HepG2 (cell line): ENCODE measurements at regions of chr12 and their contacts with region 1.

Region 1: GRCh38 chr12:53079226-53080117 is at the start of gene SPRYD3:
- DNase-seq: peak; percentile 96
- ATAC-seq: peak; percentile 98
- H3K4me3 ChIP-seq: peak within 1 kb of the TSS; percentile 72 to 89 (median 73)
- H3K27ac ChIP-seq: peak within 1 kb of the TSS; percentile 91
- H3K4me1 ChIP-seq: peaks cover 53% of the 10 kb centered on the region
- H3K27me3 ChIP-seq: no peaks in the 10 kb centered on the region; a peak in 1 of 5 replicates
- CTCF ChIP-seq: no peak
- EP300 ChIP-seq: no peak
- POLR2A ChIP-seq: peak; percentile 83 to 95
- RAD21 ChIP-seq: peak; percentile 15; the same call in 1 of the 2 replicates
- total RNA-seq, gene SPRYD3: 9.0 and 9.2 TPM in 2 replicates

Region 2: DNA sequence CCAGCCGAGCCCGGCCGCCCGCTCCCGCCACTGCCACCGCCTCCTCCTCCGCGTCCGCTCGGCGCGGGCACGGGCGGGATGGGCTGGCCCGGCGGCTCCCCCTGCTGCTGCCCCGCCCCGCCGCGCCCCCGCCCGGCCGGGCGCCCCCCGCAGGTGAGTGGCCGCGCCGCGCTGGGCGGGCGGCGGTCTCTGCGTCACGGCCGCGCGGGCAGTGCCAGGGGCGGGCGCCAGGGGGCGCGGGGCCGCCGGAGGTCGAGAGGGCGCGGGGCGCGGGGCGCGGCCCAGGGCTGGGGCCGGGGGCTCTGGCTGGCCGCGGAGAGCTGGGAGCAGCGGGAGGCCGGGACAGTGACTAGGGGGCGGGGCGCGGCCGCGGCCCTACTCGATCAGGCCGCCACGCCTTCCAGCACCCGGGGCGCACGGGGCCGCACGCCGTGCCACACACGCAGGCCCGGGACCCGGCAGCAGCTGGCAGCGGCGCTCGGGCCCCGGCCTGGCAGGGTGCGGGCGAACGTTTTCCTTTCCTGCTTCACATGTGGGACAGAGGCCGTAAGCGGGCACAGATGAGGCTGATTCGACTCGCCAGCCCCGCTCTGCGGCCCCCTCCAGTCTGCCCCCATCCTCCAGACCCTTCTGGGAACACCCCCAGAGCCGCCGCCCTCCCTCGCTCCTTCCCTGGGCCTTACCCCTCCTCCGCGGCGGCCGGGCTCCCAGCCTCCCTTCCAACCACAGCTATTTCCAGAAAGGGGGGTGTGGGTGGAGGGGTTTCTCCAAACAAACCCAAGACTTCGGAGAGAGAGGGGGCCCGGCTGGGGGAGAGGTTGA is 32.0 kb before region 1 on chr12:
- CTCF ChIA-PET with region 1: no interaction called
- POLR2A ChIA-PET with region 1: interaction called, 60 read pairs
- in situ Hi-C with region 1: no loop called
- intact Hi-C with region 1: no loop called
- DNase-seq: peak; percentile 44
- ATAC-seq: peak; percentile 2
- H3K4me3 ChIP-seq: peak overlapping the region; percentile 77 to 91 (median 83)
- H3K27ac ChIP-seq: peak overlapping the region; percentile 89
- H3K4me1 ChIP-seq: peaks cover 79% of the 10 kb centered on the region
- H3K27me3 ChIP-seq: no peaks in the 10 kb centered on the region; a peak in 1 of 5 replicates
- CTCF ChIP-seq: peak; percentile 3; the same call in 1 of the 2 replicates
- EP300 ChIP-seq: no peak
- POLR2A ChIP-seq: 0 out of 4 replicates have a peak, but pooled peaks of 1 of the 2 experiments have one; percentile 3
- RAD21 ChIP-seq: 0 out of 2 replicates have a peak, but pooled peaks have one; percentile 18

Region 3: GRCh38 chr12:53065975-53066931 is 13.2 kb before region 1 on chr12:
- CTCF ChIA-PET with region 1: no interaction called
- POLR2A ChIA-PET with region 1: interaction called, 43 read pairs
- in situ Hi-C with region 1: no loop called
- intact Hi-C with region 1: no loop called
- DNase-seq: peak; percentile 57
- ATAC-seq: peak; percentile 66
- H3K4me3 ChIP-seq: no peak overlapping the region
- H3K27ac ChIP-seq: no peak overlapping the region
- H3K4me1 ChIP-seq: peaks cover 25% of the 10 kb centered on the region
- H3K27me3 ChIP-seq: no peaks in the 10 kb centered on the region
- CTCF ChIP-seq: peak; percentile 95
- EP300 ChIP-seq: no peak
- POLR2A ChIP-seq: no peak
- RAD21 ChIP-seq: peak; percentile 95

Region 4: GRCh38 chr12:53098982-53099651 is 19.6 kb after region 1 on chr12:
- CTCF ChIA-PET with region 1: no interaction called
- POLR2A ChIA-PET with region 1: interaction called, 102 read pairs
- in situ Hi-C with region 1: no loop called
- intact Hi-C with region 1: loop called (anchors 2 kb)
- DNase-seq: peak; percentile 91
- ATAC-seq: peak; percentile 24
- H3K4me3 ChIP-seq: peak overlapping the region; percentile 56 to 90 (median 78); a peak in 5 of 6 replicates
- H3K27ac ChIP-seq: no peak overlapping the region
- H3K4me1 ChIP-seq: peaks cover 91% of the 10 kb centered on the region
- H3K27me3 ChIP-seq: peaks cover 0 to 6% of the 10 kb centered on the region in 2 experiments; a peak in 2 of 5 replicates
- CTCF ChIP-seq: peak; percentile 89
- EP300 ChIP-seq: peak in 1 of 2 experiments; percentile 51; a peak in 1 of 4 replicates
- POLR2A ChIP-seq: no peak
- RAD21 ChIP-seq: peak; percentile 89

Region 5: DNA sequence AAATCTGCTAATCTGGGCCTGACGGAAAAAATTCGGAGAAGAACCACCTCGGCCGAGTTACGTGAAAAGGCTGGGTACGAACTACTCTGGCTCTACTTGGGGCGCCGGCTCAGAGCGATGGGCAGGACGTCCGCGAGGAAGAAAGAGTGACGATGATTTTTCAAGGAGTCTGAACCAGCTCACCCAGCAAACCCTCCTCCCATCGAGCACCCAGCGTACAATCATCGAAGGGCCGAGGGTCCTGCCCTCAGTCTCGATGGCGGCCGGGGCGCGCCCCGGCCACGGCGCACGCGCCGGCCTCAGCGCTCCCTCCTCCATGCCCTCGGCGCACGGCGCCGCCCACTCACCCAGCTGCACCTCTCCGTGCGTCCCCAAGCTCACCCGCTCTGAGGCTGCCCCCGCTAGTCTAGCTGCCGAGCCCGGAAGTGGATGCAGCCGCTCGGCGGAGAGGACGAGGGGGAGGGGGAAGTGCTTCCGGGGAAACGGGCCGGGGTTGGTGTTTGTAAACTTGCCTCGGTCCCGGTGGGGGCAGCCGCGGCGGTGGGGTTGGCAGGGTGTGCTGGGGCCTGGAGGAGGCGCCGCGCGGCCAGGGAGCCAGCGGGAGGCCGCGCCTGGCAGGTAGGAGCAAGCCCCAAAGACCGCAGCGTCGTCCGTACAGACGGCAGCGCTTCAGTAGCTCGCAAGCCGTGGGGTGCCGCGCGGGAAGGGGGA is 100.9 kb after region 1 on chr12 and contains the starts of genes CSAD and ZNF740:
- CTCF ChIA-PET with region 1: no interaction called
- POLR2A ChIA-PET with region 1: interaction called, 20 read pairs
- in situ Hi-C with region 1: no loop called
- intact Hi-C with region 1: no loop called
- DNase-seq: peak; percentile 95
- ATAC-seq: peak; percentile 98
- H3K4me3 ChIP-seq: peak within 1 kb of the TSS; percentile 64 to 93 (median 82)
- H3K27ac ChIP-seq: peak within 1 kb of the TSS; percentile 91
- H3K4me1 ChIP-seq: peaks cover 56% of the 10 kb centered on the region
- H3K27me3 ChIP-seq: no peaks in the 10 kb centered on the region; a peak in 1 of 5 replicates
- CTCF ChIP-seq: no peak; the same call in 1 of the 2 replicates
- EP300 ChIP-seq: no peak
- POLR2A ChIP-seq: peak; percentile 75 to 88
- RAD21 ChIP-seq: no peak
- total RNA-seq, gene CSAD: 2.7 and 7.2 TPM in 2 replicates
- total RNA-seq, gene ZNF740: 15.0 and 16.9 TPM in 2 replicates

Region 6: GRCh38 chr12:53518381-53518780 is 438.9 kb after region 1 on chr12:
- CTCF ChIA-PET with region 1: no interaction called
- POLR2A ChIA-PET with region 1: no interaction called
- in situ Hi-C with region 1: no loop called
- intact Hi-C with region 1: no loop called
- DNase-seq: no peak
- ATAC-seq: no peak
- H3K4me3 ChIP-seq: no peak overlapping the region
- H3K27ac ChIP-seq: no peak overlapping the region
- H3K4me1 ChIP-seq: no peaks in the 10 kb centered on the region
- H3K27me3 ChIP-seq: no peaks in the 10 kb centered on the region
- CTCF ChIP-seq: no peak
- EP300 ChIP-seq: no peak
- POLR2A ChIP-seq: no peak
- RAD21 ChIP-seq: no peak